ENCODE measurements at regions of chr7 and their contacts with region 1.

Region 1: GRCh38 chr7:30406664-30407425 is 71.7 kb downstream of the NOD1 start:
- DNase-seq: peak; percentile 97
- H3K4me3 ChIP-seq: no peak overlapping the region
- H3K27ac ChIP-seq: peak overlapping the region; percentile 81
- H3K4me1 ChIP-seq: peaks cover 40% of the 10 kb centered on the region
- H3K27me3 ChIP-seq: no peaks in the 10 kb centered on the region
- CTCF ChIP-seq: no peak

Region 2: GRCh38 chr7:30322271-30323005 is 84.4 kb before region 1 on chr7:
- CTCF ChIA-PET with region 1: no interaction called
- dilution Hi-C with region 1: no loop called
- in situ Hi-C with region 1: no loop called
- intact Hi-C with region 1: loop called (anchors 1 kb)
- DNase-seq: peak; percentile 58
- H3K4me3 ChIP-seq: peak overlapping the region in 2 of 3 experiments; percentile 5 to 44
- H3K27ac ChIP-seq: peak overlapping the region; percentile 87
- H3K4me1 ChIP-seq: peaks cover 50% of the 10 kb centered on the region
- H3K27me3 ChIP-seq: no peaks in the 10 kb centered on the region
- CTCF ChIP-seq: no peak

Region 3: GRCh38 chr7:30348083-30348560 is 58.7 kb before region 1 on chr7:
- CTCF ChIA-PET with region 1: no interaction called
- dilution Hi-C with region 1: no loop called
- in situ Hi-C with region 1: no loop called
- intact Hi-C with region 1: loop called (anchors 2 kb)
- DNase-seq: peak; percentile 92
- H3K4me3 ChIP-seq: peak overlapping the region in 1 of 3 experiments; percentile 41
- H3K27ac ChIP-seq: peak overlapping the region; percentile 68
- H3K4me1 ChIP-seq: peaks cover 21% of the 10 kb centered on the region
- H3K27me3 ChIP-seq: no peaks in the 10 kb centered on the region
- CTCF ChIP-seq: no peak

Region 4: DNA sequence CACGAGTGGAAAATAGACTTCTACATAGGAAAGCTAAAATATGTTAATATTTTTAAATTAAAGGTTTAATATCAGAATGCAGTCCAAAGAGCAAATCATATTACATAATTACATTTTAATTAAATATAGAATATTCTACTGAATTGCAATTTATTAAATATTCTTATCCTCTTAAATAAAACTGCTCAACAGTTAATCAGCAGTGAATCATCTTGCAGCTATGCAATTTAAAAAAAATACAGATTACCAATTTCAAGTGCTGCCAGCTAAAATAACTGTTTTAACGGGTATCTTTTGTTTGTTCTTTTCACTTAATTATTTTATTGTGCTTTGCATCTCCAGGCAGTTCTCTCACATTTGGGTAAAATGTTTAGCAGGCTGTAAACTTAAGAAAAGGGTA is 40.2 kb before region 1 on chr7:
- CTCF ChIA-PET with region 1: no interaction called
- dilution Hi-C with region 1: no loop called
- in situ Hi-C with region 1: no loop called
- intact Hi-C with region 1: loop called (anchors 5 kb)
- DNase-seq: no peak
- H3K4me3 ChIP-seq: no peak overlapping the region
- H3K27ac ChIP-seq: no peak overlapping the region
- H3K4me1 ChIP-seq: peaks cover 6% of the 10 kb centered on the region
- H3K27me3 ChIP-seq: no peaks in the 10 kb centered on the region
- CTCF ChIP-seq: no peak

Region 5: DNA sequence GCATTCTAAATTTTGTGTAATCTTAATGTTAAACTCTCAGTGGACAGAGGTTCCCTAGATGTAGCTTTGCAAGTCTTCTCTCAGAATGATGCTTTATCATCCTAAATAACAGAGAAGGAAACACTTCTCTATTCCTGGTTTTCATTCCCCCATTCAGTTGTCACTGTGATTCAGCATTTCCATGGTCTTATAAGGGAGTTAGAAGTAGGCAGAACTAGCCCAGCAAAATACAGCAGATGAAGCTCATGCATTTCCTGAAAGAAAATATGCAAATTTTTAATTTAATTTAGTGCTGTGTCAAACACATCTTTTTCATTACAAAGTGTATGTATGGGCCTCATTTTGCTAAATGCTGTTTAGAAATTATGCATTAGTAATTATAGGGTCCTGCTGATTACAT is 1177.1 kb after region 1 on chr7:
- CTCF ChIA-PET with region 1: no interaction called
- dilution Hi-C with region 1: no loop called
- in situ Hi-C with region 1: no loop called
- intact Hi-C with region 1: no loop called
- DNase-seq: no peak
- H3K4me3 ChIP-seq: no peak overlapping the region
- H3K27ac ChIP-seq: no peak overlapping the region
- H3K4me1 ChIP-seq: no peaks in the 10 kb centered on the region
- H3K27me3 ChIP-seq: peaks cover 2% of the 10 kb centered on the region
- CTCF ChIP-seq: no peak

Measured in mammary epithelial cell (primary cell).